ENCODE measurements at regions of chr5 and their contacts with region 1.

Region 1: GRCh38 chr5:87400305-87400899 is 12.3 kb downstream of the CCNH start:
- DNase-seq: peak; percentile 58
- ATAC-seq: peak; percentile 68
- H3K4me3 ChIP-seq: no peak overlapping the region
- H3K4me3 Mint-ChIP-seq: no peak overlapping the region
- H3K27ac ChIP-seq: peak overlapping the region in 1 of 2 donors; percentile 42
- H3K27ac Mint-ChIP-seq: no peak overlapping the region
- H3K4me1 ChIP-seq: peaks cover 0 to 6% of the 10 kb centered on the region in 2 donors
- H3K4me1 Mint-ChIP-seq: peaks cover 9% of the 10 kb centered on the region
- H3K27me3 ChIP-seq: no peaks in the 10 kb centered on the region
- H3K27me3 Mint-ChIP-seq: no peaks in the 10 kb centered on the region
- CTCF ChIP-seq: peak; percentile 90

Region 2: DNA sequence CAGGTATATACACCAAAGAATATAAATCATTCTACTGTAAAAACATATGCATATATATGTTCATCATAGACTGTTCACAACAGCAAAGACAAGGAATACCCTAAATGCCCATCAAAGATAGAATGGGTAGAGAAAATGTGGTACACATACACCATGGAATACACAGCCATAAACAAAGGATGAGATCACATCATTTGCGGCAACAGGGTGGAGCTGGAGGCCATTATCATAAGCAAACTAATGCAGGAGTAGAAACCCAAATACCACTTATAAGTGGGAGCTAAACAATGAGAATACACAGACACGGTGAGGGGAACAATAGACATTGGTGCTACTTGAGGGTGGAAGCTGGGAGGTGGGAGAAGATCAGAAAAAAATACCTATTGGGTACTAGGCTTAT is 665.0 kb before region 1 on chr5:
- CTCF ChIA-PET with region 1: no interaction called
- POLR2A ChIA-PET with region 1: no interaction called
- intact Hi-C with region 1: no loop called
- DNase-seq: no peak
- ATAC-seq: no peak
- H3K4me3 ChIP-seq: no peak overlapping the region
- H3K4me3 Mint-ChIP-seq: no peak overlapping the region
- H3K27ac ChIP-seq: no peak overlapping the region
- H3K27ac Mint-ChIP-seq: no peak overlapping the region
- H3K4me1 ChIP-seq: no peaks in the 10 kb centered on the region
- H3K4me1 Mint-ChIP-seq: no peaks in the 10 kb centered on the region
- H3K27me3 ChIP-seq: no peaks in the 10 kb centered on the region
- H3K27me3 Mint-ChIP-seq: no peaks in the 10 kb centered on the region
- CTCF ChIP-seq: no peak

Region 3: GRCh38 chr5:86880785-86881492 is 519.5 kb before region 1 on chr5:
- CTCF ChIA-PET with region 1: interaction called, 8 read pairs
- POLR2A ChIA-PET with region 1: no interaction called
- intact Hi-C with region 1: loop called (anchors 1 kb)
- DNase-seq: peak; percentile 36
- ATAC-seq: peak; percentile 62
- H3K4me3 ChIP-seq: no peak overlapping the region
- H3K4me3 Mint-ChIP-seq: no peak overlapping the region
- H3K27ac ChIP-seq: no peak overlapping the region
- H3K27ac Mint-ChIP-seq: no peak overlapping the region
- H3K4me1 ChIP-seq: no peaks in the 10 kb centered on the region
- H3K4me1 Mint-ChIP-seq: no peaks in the 10 kb centered on the region
- H3K27me3 ChIP-seq: no peaks in the 10 kb centered on the region
- H3K27me3 Mint-ChIP-seq: no peaks in the 10 kb centered on the region
- CTCF ChIP-seq: peak; percentile 52

Region 4: GRCh38 chr5:86971034-86971571 is 429.3 kb before region 1 on chr5:
- CTCF ChIA-PET with region 1: interaction called, 5 read pairs
- POLR2A ChIA-PET with region 1: no interaction called
- intact Hi-C with region 1: loop called (anchors 1 kb)
- DNase-seq: peak; percentile 10
- ATAC-seq: no peak
- H3K4me3 ChIP-seq: no peak overlapping the region
- H3K4me3 Mint-ChIP-seq: no peak overlapping the region
- H3K27ac ChIP-seq: no peak overlapping the region
- H3K27ac Mint-ChIP-seq: no peak overlapping the region
- H3K4me1 ChIP-seq: no peaks in the 10 kb centered on the region
- H3K4me1 Mint-ChIP-seq: peaks cover 3% of the 10 kb centered on the region
- H3K27me3 ChIP-seq: peaks cover 0 to 13% (median 2%) of the 10 kb centered on the region in 4 experiments
- H3K27me3 Mint-ChIP-seq: peaks cover 19% of the 10 kb centered on the region
- CTCF ChIP-seq: peak; percentile 18

Region 5: GRCh38 chr5:86986837-86987236 is 413.6 kb before region 1 on chr5:
- CTCF ChIA-PET with region 1: interaction called, 25 read pairs
- POLR2A ChIA-PET with region 1: no interaction called
- intact Hi-C with region 1: loop called (anchors 1 kb)
- DNase-seq: no peak
- ATAC-seq: no peak
- H3K4me3 ChIP-seq: no peak overlapping the region
- H3K4me3 Mint-ChIP-seq: no peak overlapping the region
- H3K27ac ChIP-seq: no peak overlapping the region
- H3K27ac Mint-ChIP-seq: no peak overlapping the region
- H3K4me1 ChIP-seq: no peaks in the 10 kb centered on the region
- H3K4me1 Mint-ChIP-seq: no peaks in the 10 kb centered on the region
- H3K27me3 ChIP-seq: no peaks in the 10 kb centered on the region
- H3K27me3 Mint-ChIP-seq: peaks cover 4% of the 10 kb centered on the region
- CTCF ChIP-seq: peak; percentile 32

Region 6: GRCh38 chr5:87069974-87070624 is 330.3 kb before region 1 on chr5:
- CTCF ChIA-PET with region 1: interaction called, 62 read pairs
- POLR2A ChIA-PET with region 1: no interaction called
- intact Hi-C with region 1: loop called (anchors 1 kb)
- DNase-seq: peak; percentile 48
- ATAC-seq: peak; percentile 49
- H3K4me3 ChIP-seq: no peak overlapping the region
- H3K4me3 Mint-ChIP-seq: no peak overlapping the region
- H3K27ac ChIP-seq: no peak overlapping the region
- H3K27ac Mint-ChIP-seq: no peak overlapping the region
- H3K4me1 ChIP-seq: peaks cover 19% of the 10 kb centered on the region in 2 donors
- H3K4me1 Mint-ChIP-seq: peaks cover 24% of the 10 kb centered on the region
- H3K27me3 ChIP-seq: no peaks in the 10 kb centered on the region
- H3K27me3 Mint-ChIP-seq: no peaks in the 10 kb centered on the region
- CTCF ChIP-seq: peak; percentile 40

Region 7: DNA sequence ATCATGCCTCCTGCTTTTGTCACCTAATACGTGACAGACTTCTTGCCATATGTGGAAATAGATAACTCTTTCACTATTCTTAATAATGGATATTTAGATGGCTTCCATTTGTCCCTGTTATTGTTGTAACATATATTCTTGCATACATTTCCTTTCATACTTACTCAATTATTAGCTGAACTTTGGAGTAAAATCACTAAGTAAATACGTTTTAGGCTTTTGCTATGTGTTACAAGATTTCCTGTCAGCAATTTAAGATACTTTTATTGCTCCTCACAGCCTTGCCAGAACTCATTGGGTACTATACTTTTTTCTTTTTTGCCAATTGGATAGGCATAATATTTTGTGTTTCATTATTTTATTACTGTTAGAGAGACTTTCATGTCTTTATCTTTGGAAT is 14.6 kb before region 1 on chr5:
- CTCF ChIA-PET with region 1: interaction called, 20 read pairs
- POLR2A ChIA-PET with region 1: no interaction called
- intact Hi-C with region 1: no loop called
- DNase-seq: no peak
- ATAC-seq: no peak
- H3K4me3 ChIP-seq: no peak overlapping the region
- H3K4me3 Mint-ChIP-seq: no peak overlapping the region
- H3K27ac ChIP-seq: no peak overlapping the region
- H3K27ac Mint-ChIP-seq: no peak overlapping the region
- H3K4me1 ChIP-seq: no peaks in the 10 kb centered on the region
- H3K4me1 Mint-ChIP-seq: no peaks in the 10 kb centered on the region
- H3K27me3 ChIP-seq: no peaks in the 10 kb centered on the region
- H3K27me3 Mint-ChIP-seq: no peaks in the 10 kb centered on the region
- CTCF ChIP-seq: no peak

Region 8: GRCh38 chr5:87412630-87413342 is 12.4 kb after region 1 on chr5 and contains the start of gene CCNH:
- CTCF ChIA-PET with region 1: interaction called, 20 read pairs
- POLR2A ChIA-PET with region 1: interaction called, 5 read pairs
- intact Hi-C with region 1: loop called (anchors 1 kb)
- DNase-seq: peak; percentile 98
- ATAC-seq: peak; percentile 99
- H3K4me3 ChIP-seq: peak within 1 kb of the TSS; percentile 76 to 100 (median 84)
- H3K4me3 Mint-ChIP-seq: peak within 1 kb of the TSS; percentile 93
- H3K27ac ChIP-seq: peak within 1 kb of the TSS; percentile 89 to 96
- H3K27ac Mint-ChIP-seq: peak within 1 kb of the TSS; percentile 93
- H3K4me1 ChIP-seq: peaks cover 13 to 20% of the 10 kb centered on the region in 2 donors
- H3K4me1 Mint-ChIP-seq: peaks cover 30% of the 10 kb centered on the region
- H3K27me3 ChIP-seq: no peaks in the 10 kb centered on the region
- H3K27me3 Mint-ChIP-seq: no peaks in the 10 kb centered on the region
- CTCF ChIP-seq: no peak
- total RNA-seq, gene CCNH: 120 and 137 TPM in 2 replicates

Region 9: GRCh38 chr5:87541033-87541432 is 140.6 kb after region 1 on chr5:
- CTCF ChIA-PET with region 1: no interaction called
- POLR2A ChIA-PET with region 1: no interaction called
- intact Hi-C with region 1: no loop called
- DNase-seq: no peak
- ATAC-seq: no peak
- H3K4me3 ChIP-seq: no peak overlapping the region
- H3K4me3 Mint-ChIP-seq: no peak overlapping the region
- H3K27ac ChIP-seq: no peak overlapping the region
- H3K27ac Mint-ChIP-seq: no peak overlapping the region
- H3K4me1 ChIP-seq: no peaks in the 10 kb centered on the region
- H3K4me1 Mint-ChIP-seq: no peaks in the 10 kb centered on the region
- H3K27me3 ChIP-seq: no peaks in the 10 kb centered on the region
- H3K27me3 Mint-ChIP-seq: no peaks in the 10 kb centered on the region
- CTCF ChIP-seq: no peak